Ovary (tissue), 10 donors: ENCODE measurements at regions of chr2 and their contacts with region 1.

Region 1: DNA sequence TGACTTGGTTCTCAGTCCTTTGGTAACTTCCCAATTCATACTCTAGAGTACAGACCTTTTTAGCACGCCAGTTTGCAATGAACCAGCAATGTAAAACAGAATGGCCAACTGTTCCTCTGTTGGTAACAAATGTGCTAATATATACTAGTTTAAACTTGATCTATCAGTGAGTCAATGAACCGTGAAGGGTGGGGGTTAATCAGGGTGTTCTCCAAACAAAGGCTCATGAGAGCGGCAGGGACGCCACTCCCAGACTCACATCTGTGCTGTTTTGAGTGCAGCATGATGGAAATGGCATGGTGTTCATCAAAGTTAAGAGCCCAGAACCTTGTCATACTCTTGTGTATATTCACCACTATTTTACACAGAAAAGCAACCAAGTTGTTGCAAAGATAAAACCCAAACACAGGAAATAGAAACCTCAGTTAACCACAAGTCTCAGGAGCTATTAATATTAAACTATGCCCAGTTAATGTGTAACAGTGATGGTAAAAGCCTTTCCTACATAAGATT is 70.3 kb downstream of the CERKL start:
- DNase-seq: no peak
- H3K4me3 ChIP-seq: no peak overlapping the region
- H3K27ac ChIP-seq: no peak overlapping the region
- H3K4me1 ChIP-seq: no peaks in the 10 kb centered on the region
- H3K27me3 ChIP-seq: no peaks in the 10 kb centered on the region
- CTCF ChIP-seq: no peak
- EP300 ChIP-seq: no peak
- POLR2A ChIP-seq: no peak

Region 2: GRCh38 chr2:181411105-181411849 is 175.3 kb before region 1 on chr2:
- intact Hi-C with region 1: no loop called
- DNase-seq: no peak
- H3K4me3 ChIP-seq: no peak overlapping the region
- H3K27ac ChIP-seq: no peak overlapping the region
- H3K4me1 ChIP-seq: no peaks in the 10 kb centered on the region
- H3K27me3 ChIP-seq: no peaks in the 10 kb centered on the region
- CTCF ChIP-seq: no peak
- EP300 ChIP-seq: no peak
- POLR2A ChIP-seq: no peak

Region 3: DNA sequence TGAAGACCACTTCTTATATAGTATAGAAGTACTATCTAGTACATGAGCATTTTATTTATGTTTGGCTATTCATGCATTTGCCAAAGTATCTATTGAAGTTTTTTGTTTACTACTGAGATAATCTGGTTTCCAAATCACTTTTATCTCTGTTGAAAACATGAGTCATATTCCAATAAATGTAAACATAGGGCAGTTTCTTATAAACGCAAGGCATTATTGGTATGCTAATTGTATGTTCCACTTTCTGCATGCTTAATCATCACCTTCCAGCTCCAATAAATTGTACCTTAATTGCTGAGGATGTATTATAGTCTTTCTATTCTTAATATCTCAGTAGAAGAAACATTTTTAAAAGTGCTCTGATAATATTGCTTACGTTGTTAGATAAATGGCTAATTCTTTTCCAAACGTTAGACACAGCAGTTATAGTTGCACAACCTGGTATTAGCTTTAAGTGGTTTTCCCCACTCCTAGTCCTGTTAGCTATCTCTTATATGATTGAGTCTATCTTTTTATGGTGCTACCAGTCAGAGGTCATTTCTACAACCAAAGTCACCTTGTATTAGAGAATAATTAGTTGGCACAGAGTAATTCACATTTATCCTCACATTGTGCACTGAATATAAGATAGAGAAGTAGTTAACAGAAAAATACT is 112.3 kb before region 1 on chr2:
- intact Hi-C with region 1: no loop called
- DNase-seq: no peak
- H3K4me3 ChIP-seq: no peak overlapping the region
- H3K27ac ChIP-seq: no peak overlapping the region
- H3K4me1 ChIP-seq: no peaks in the 10 kb centered on the region
- H3K27me3 ChIP-seq: no peaks in the 10 kb centered on the region
- CTCF ChIP-seq: no peak
- EP300 ChIP-seq: no peak
- POLR2A ChIP-seq: no peak

Region 4: DNA sequence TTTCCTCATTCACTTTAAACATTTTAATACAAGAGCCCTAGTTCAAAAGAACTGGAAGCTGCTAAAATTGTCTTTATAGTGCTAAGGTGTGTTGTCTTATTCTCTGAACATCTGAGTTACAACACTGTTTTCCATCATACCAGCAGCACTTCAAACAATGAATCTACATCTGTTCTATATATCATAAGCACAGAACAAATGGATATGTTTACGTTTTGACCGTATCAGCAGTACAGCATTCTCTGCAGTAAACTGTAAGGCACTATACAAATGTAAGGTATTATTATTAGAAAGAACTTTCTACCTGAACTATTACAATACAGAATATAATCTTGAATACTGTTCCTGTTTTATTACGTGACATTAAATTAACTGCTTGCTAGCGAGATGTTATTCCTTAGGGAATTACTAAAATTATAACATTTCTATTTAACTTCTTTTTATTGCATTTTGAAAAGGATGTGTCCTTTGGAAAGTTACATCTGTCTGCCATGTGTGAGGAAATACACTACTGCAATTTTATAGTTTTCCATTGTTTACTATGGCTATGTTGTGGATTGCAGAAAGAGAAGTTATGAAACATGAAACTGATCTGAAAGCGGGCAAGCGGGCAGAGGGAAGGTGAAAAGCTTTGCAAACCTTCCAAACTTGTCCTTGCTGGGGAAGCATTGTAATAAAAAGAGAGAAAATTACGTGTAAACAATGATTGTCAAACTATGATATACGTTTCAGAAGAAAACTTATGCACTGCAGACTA is 1437.9 kb after region 1 on chr2:
- intact Hi-C with region 1: loop called in 1 of 4 experiments (anchors 5 kb)
- DNase-seq: no peak
- H3K4me3 ChIP-seq: no peak overlapping the region
- H3K27ac ChIP-seq: no peak overlapping the region
- H3K4me1 ChIP-seq: peaks cover 3% of the 10 kb centered on the region
- H3K27me3 ChIP-seq: no peaks in the 10 kb centered on the region
- CTCF ChIP-seq: no peak
- EP300 ChIP-seq: no peak
- POLR2A ChIP-seq: no peak